Dorsolateral prefrontal cortex (tissue), 120 donors: ENCODE measurements at regions of chr14 and their contacts with region 1.

Region 1: DNA sequence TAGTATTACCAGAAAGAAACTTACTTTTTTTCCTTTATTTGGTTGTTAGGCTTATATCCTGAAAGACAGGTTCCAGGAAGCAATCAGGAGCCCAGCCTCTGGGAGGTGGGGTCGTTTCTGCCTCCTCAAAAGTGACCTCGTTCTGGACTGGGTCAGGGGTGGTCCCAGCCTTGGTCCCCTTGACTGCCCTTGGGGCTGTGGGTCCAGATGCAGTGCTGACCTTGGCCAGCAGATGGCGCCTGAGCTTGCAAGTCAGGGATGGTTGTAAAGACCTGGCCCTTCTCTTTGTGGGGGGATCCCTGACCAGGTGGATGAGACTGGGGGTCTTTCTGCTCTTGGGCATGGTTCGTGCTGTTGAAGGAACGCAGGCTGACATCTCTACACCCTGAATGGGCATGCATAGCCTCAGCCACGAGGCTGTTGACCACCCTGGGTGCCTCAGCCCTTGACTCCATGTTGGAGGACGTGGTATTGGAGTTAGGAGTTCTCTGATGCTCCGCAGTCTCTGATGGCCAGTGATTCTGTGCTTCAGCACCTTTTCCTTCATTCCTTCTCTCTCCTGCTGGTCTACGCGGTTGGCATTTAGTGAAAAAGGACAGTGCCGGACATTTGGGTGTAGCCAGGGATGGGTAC is 62.4 kb downstream of the ADCK1 start:
- DNase-seq: peak; percentile 73 to 94 (median 87)
- H3K4me3 ChIP-seq: no peak overlapping the region
- H3K27ac ChIP-seq: peak overlapping the region in 5 of 59 donors; percentile 3 to 70 (median 49)
- H3K27me3 ChIP-seq: no peaks in the 10 kb centered on the region
- CTCF ChIP-seq: peak; percentile 86 to 100 (median 98)

Region 2: GRCh38 chr14:77961644-77962580 is 99.6 kb after region 1 on chr14:
- intact Hi-C with region 1: no loop called
- DNase-seq: no peak
- H3K4me3 ChIP-seq: no peak overlapping the region
- H3K27ac ChIP-seq: no peak overlapping the region
- H3K27me3 ChIP-seq: peaks cover 0 to 4% (median 0%) of the 10 kb centered on the region in 45 donors
- CTCF ChIP-seq: peak in 3 of 56 donors; percentile 6 to 21 (median 7)

Region 3: DNA sequence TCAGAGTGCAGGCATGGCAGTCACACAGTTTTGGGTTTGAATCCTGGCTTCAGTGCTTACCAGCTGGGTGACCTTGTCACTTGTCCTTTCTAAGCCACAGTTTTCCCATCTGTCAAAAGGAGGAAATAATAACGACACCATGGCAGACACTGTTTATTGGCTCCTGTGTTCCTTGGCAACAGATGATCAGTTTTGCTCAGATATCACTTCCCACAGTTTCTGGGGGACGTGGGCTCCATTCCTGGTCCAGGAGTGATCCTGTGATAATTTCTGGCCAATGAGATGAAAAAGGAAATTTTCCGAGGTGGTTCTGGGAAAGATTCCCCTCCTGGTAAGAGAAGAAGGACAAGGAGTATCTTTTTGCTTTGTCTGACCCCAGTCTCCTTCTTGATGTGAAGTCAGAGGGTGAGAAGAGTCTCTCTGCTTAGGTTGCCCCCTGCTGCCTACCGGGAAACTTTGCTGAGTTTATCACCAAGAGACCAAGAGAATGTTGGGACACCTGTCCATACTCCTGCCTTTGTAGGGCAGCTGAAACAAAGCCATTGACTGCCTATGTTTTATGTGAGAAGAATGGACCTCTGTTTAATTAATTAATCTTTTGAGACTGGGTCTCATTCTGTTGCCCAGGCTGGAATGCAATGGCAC is 129.0 kb after region 1 on chr14:
- intact Hi-C with region 1: loop called (anchors 5 kb)
- DNase-seq: no peak
- H3K4me3 ChIP-seq: no peak overlapping the region
- H3K27ac ChIP-seq: peak overlapping the region; percentile 72 to 99 (median 94)
- H3K27me3 ChIP-seq: no peaks in the 10 kb centered on the region
- CTCF ChIP-seq: peak in 39 of 56 donors; percentile 14 to 70 (median 36)

Region 4: DNA sequence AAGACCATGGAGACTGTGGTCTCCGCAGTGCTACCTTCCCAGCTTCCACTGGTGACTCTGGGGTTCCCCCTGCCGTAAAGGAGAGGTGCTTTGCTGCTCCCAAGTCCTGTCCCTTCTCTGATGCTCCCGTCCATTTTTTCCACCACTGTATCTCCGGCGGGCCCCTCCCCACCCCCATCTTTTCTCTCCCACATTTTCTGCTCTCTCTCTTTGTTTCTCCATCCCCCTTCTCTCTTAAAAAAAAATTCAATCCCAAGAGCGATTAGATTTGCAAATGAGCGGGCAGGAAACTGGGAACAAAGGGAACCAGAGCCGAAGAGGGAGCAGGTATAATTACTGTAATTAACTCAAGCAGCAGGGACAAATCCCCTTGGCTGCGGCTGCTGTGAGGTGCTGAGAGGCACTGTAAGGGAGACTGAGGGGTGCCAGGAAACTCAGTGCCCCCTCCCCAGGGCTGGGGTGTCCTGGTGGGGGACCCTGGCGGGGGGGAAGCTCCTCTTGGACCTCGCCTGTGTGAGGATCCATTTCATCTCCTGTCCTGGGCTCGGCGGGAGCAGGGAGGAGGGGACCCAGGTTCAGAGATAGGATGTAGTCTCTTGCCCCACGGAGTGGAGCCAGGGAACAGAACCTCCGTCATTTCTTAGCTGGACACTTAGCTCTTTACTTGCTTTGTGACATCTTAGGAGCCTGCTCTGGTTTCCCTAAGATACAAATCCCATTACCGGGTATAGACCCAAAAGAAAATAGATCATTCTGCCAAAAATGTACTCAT is 167.5 kb after region 1 on chr14:
- intact Hi-C with region 1: loop called in 1 of 2 experiments (anchors 2 kb)
- DNase-seq: peak in 4 of 10 donors; percentile 8 to 52 (median 44)
- H3K4me3 ChIP-seq: no peak overlapping the region
- H3K27ac ChIP-seq: peak overlapping the region in 1 of 59 donors; percentile 18
- H3K27me3 ChIP-seq: peaks cover 0 to 2% (median 0%) of the 10 kb centered on the region in 45 donors
- CTCF ChIP-seq: peak in 42 of 56 donors; percentile 12 to 65 (median 38)

Region 5: DNA sequence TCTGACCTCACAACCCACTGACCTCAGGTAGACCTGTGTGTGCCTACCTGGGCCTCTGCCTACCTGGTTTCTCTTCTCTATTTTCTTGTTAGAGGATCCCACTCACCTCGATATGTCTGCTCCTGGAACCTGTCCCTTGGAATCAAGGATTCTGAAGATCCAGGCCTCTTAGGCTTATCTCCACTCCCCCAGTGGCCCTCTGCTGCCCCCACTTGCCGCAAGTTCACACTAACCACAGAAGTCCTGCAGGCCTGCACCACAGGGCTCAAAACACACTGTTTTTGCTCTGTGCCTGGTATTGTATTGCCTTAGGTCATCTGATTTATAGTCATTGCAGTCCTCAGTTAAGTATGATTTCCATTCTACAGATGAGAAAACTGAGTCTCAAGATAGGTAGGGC is 292.6 kb after region 1 on chr14:
- intact Hi-C with region 1: loop called in 1 of 2 experiments (anchors 2 kb)
- DNase-seq: no peak
- H3K4me3 ChIP-seq: no peak overlapping the region
- H3K27ac ChIP-seq: no peak overlapping the region
- H3K27me3 ChIP-seq: no peaks in the 10 kb centered on the region
- CTCF ChIP-seq: peak in 37 of 56 donors; percentile 3 to 45 (median 28)

Region 6: DNA sequence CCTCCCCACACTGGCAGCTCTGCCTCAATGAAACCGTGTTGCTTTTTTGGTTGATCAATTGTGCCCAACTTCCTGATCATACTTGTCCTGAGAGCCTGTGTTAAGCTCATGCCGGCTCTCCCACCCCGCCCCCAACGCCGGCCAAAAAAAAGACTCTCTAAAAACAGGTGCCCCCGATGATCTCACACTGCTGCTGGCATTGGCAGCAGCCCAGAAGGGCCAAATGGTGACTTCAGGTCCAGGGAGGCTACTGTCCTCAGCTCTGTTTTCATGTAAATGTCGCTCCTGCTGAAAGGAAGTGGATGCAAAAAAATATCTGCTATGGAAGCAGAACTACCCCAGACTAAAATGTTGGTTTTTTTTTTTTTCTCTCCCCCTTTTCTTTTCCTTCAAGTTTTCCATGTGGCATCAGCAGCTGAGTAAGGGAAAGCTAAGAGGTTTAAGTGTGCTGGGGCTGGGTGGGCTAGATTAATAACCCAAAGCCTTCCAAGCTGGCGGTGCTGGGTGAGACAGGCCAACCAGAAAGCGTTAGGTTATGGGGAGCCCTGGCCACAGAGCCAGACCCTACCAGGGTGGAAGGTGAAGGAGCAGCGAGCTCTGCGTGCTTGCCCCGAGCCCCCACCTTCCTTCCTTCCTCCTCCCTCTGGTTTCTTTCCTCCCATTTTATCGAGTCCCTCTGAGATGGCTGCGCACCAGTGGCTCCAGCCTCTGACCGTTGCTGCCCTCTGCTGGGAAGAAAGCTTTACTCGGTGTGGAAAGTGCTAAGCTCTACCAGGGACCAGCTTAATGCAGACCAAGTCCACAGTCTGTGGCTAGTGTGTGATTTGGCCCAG is 704.0 kb after region 1 on chr14:
- intact Hi-C with region 1: loop called in 1 of 2 experiments (anchors 5 kb)
- DNase-seq: peak; percentile 73 to 91 (median 87)
- H3K4me3 ChIP-seq: peak overlapping the region; percentile 11 to 68 (median 51)
- H3K27ac ChIP-seq: peak overlapping the region in 30 of 59 donors; percentile 10 to 83 (median 52)
- H3K27me3 ChIP-seq: no peaks in the 10 kb centered on the region
- CTCF ChIP-seq: peak; percentile 55 to 92 (median 85)

Region 7: DNA sequence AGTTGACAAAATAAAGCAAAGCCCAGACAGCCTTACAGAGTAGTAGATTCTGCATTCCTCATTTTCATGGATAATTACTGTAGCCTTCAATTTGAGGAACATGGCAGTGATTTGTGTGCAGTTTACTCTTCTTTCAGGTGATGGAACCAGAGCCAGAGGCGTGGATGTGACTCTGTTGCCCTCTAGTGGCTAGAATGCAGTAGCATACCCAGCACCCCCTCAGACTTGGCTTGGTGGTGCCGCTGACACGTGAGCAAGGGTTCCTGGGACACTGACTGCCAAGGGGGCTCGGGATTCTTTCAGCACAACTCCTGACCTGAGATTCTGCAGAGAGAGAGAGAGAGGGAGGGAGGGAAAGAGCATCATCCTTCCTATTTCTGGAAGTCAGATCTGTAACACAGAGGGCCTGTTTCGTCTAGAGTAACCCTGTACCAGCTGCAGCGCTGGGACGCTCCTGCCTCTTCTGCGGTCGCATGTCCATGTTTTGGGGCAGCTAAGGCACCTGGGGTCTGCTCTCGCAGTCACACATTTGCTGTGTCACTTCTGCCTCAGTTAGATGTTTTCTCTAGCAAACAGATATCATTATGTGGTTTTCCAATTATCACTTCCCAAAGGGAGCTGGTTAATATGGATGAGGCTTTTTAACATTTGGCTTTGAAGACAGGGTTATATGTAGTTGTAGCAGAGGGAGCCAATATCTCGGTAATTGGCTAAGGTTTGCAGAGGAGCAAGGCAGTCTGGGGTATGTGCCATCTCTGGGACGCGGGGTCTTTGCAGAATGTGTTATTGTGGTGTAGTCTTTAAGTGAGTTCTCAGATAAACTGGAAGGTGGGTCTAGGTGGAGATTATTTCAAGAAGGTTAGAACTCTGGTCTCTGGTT is 736.0 kb after region 1 on chr14:
- intact Hi-C with region 1: loop called in 1 of 2 experiments (anchors 5 kb)
- DNase-seq: peak; percentile 30 to 74 (median 64)
- H3K4me3 ChIP-seq: peak overlapping the region in 35 of 59 donors; percentile 1 to 58 (median 30)
- H3K27ac ChIP-seq: peak overlapping the region in 28 of 59 donors; percentile 1 to 68 (median 36)
- H3K27me3 ChIP-seq: no peaks in the 10 kb centered on the region
- CTCF ChIP-seq: peak; percentile 54 to 94 (median 88)